ENCODE measurements at regions of chr5 and their contacts with region 1.

Region 1: GRCh38 chr5:108381954-108382783 is at the start of gene FBXL17:
- DNase-seq: peak; percentile 89
- H3K4me3 Mint-ChIP-seq: peak within 1 kb of the TSS; percentile 83
- H3K27ac Mint-ChIP-seq: peak within 1 kb of the TSS; percentile 84
- H3K4me1 Mint-ChIP-seq: peaks cover 34% of the 10 kb centered on the region
- H3K27me3 Mint-ChIP-seq: peaks cover 1% of the 10 kb centered on the region
- total RNA-seq, gene FBXL17: 8.2 and 12.2 TPM in 2 replicates

Region 2: GRCh38 chr5:107389130-107389774 is 992.9 kb before region 1 on chr5:
- intact Hi-C with region 1: loop called (anchors 2 kb)
- DNase-seq: peak; percentile 13
- H3K4me3 Mint-ChIP-seq: peak overlapping the region; percentile 50
- H3K27ac Mint-ChIP-seq: peak overlapping the region; percentile 74
- H3K4me1 Mint-ChIP-seq: peaks cover 29% of the 10 kb centered on the region
- H3K27me3 Mint-ChIP-seq: no peaks in the 10 kb centered on the region

Region 3: DNA sequence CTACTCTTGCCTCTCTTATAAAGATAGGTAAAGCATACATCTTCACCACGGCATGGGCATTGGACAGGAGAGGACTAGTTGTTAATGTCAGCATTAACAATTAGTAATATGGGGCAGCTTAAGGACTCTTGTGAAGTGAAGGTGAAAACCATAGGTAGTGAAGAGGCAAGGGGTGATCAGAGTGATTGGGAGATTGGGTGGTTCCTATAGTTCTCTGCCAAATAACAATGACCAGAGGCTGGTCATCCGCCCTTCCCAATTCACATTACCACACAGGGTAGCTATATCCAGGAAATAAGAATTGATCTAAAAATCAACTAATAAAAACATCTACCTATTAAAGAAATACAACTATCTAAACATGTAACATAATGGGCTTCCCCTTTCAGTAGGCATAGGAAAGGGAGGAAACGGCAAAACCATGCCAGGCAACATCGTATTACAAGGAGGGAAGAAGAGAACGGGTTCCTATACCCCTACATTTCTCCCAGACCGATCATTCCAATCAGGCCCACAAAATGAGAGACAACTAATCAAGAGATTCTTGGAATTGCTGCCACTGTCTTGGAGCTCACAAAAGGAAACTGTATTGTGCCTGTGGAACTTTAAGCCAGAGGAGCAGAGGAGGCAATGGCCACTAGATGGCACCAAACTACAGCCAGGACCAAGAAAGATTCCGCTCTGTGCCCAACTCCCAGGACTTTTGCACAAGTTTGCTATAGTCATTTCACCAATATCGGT is 121.9 kb before region 1 on chr5:
- intact Hi-C with region 1: loop called (anchors 1 kb)
- DNase-seq: peak; percentile 21
- H3K4me3 Mint-ChIP-seq: no peak overlapping the region
- H3K27ac Mint-ChIP-seq: no peak overlapping the region
- H3K4me1 Mint-ChIP-seq: no peaks in the 10 kb centered on the region
- H3K27me3 Mint-ChIP-seq: no peaks in the 10 kb centered on the region

Region 4: GRCh38 chr5:108748401-108749127 is 366.4 kb after region 1 on chr5:
- intact Hi-C with region 1: loop called (anchors 2 kb)
- DNase-seq: peak; percentile 95
- H3K4me3 Mint-ChIP-seq: peak overlapping the region; percentile 87
- H3K27ac Mint-ChIP-seq: peak overlapping the region; percentile 68
- H3K4me1 Mint-ChIP-seq: peaks cover 15% of the 10 kb centered on the region
- H3K27me3 Mint-ChIP-seq: peaks cover 30% of the 10 kb centered on the region

Region 5: DNA sequence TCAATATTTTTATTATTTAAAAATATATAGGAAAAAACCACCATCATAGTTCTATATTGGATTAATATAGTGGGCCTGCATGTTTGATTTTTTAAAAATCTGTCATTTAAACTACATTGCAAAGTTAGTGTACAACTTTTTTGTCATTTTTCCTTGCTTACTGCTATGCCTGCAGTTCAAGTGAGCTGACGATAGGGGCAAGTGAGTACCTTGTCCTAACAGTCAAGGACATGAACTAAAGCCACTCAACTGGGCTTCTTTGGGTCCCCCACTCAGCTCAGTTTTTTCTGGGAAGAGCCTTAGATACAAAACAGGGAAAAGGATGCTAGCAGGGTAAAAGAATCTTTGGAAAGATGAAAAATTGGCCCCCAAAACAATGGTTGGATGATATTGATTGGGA is 1577.5 kb after region 1 on chr5:
- intact Hi-C with region 1: loop called (anchors 10 kb)
- DNase-seq: no peak
- H3K4me3 Mint-ChIP-seq: no peak overlapping the region
- H3K27ac Mint-ChIP-seq: no peak overlapping the region
- H3K4me1 Mint-ChIP-seq: peaks cover 11% of the 10 kb centered on the region
- H3K27me3 Mint-ChIP-seq: no peaks in the 10 kb centered on the region

Measured in activated T-helper 1 cell treated with anti-CD3 and anti-CD28 coated beads, Interleukin-12 subunit alpha, Interleukin-12 subunit beta, Interleukin-2, Interleukin-4 antibody, amounts not matched to agents 30 ng/mL and 10 ng/mL and 1 ng/mL, durations not matched to agents 14 hours and 24 hours and 36 hours (primary cell).